Mammary epithelial cell (primary cell): ENCODE measurements at regions of chr2 and their contacts with region 1.

Region 1: DNA sequence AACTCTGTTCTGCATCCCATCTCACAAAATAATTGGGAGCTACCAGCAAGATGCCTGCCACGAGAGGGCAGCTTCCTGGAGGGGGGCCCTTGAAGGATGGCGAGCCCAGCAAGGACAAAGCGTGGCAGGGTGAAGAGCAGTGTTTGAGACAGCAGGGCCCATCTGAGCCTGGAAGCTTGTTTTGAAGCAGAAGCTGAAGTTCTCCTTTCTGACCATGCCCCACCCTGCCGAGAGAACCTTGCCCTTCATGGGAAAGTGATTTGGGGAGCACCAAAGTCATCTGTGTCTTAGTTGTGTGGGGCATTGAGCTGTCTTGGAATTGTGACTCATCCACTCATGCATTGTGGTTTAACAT is 216.3 kb downstream of the BCL11A start:
- DNase-seq: no peak
- H3K4me3 ChIP-seq: no peak overlapping the region
- H3K27ac ChIP-seq: no peak overlapping the region
- H3K4me1 ChIP-seq: peaks cover 10% of the 10 kb centered on the region
- H3K27me3 ChIP-seq: no peaks in the 10 kb centered on the region
- CTCF ChIP-seq: no peak

Region 2: GRCh38 chr2:60247471-60247870 is 89.6 kb before region 1 on chr2:
- CTCF ChIA-PET with region 1: no interaction called
- dilution Hi-C with region 1: no loop called
- in situ Hi-C with region 1: no loop called
- intact Hi-C with region 1: loop called (anchors 5 kb)
- DNase-seq: no peak
- H3K4me3 ChIP-seq: no peak overlapping the region
- H3K27ac ChIP-seq: no peak overlapping the region
- H3K4me1 ChIP-seq: no peaks in the 10 kb centered on the region
- H3K27me3 ChIP-seq: no peaks in the 10 kb centered on the region
- CTCF ChIP-seq: no peak

Region 3: DNA sequence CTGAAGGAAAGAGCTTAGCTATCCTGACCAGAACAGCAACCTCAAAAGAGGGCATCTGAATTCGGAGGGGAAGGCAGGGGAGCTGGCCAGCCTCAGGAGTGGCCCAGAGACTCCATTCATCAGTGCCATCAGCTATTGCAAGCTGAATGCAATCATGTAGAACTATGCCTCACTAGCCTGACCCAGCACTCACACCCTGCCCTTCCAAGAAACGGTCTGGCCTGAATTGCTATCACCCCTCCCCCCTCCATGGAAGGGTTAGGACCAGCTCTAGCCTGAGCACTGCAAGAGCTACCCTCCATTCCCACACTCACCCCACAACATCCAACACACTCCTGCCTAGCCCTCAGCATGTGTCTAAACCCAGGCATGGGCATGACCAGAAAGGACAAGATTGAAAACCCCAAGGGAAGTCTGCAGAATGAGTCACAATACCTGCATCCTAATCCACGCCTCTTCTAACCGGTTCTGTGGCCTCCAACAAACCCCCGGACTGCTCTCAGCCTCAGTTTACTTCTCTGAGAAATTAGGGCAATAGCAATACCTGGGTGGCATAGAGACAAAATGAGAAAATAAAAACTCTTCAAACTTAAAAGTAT is 96.0 kb after region 1 on chr2:
- CTCF ChIA-PET with region 1: no interaction called
- dilution Hi-C with region 1: no loop called
- in situ Hi-C with region 1: no loop called
- intact Hi-C with region 1: no loop called
- DNase-seq: peak; percentile 58
- H3K4me3 ChIP-seq: no peak overlapping the region
- H3K27ac ChIP-seq: no peak overlapping the region
- H3K4me1 ChIP-seq: peaks cover 7% of the 10 kb centered on the region
- H3K27me3 ChIP-seq: no peaks in the 10 kb centered on the region
- CTCF ChIP-seq: no peak

Region 4: DNA sequence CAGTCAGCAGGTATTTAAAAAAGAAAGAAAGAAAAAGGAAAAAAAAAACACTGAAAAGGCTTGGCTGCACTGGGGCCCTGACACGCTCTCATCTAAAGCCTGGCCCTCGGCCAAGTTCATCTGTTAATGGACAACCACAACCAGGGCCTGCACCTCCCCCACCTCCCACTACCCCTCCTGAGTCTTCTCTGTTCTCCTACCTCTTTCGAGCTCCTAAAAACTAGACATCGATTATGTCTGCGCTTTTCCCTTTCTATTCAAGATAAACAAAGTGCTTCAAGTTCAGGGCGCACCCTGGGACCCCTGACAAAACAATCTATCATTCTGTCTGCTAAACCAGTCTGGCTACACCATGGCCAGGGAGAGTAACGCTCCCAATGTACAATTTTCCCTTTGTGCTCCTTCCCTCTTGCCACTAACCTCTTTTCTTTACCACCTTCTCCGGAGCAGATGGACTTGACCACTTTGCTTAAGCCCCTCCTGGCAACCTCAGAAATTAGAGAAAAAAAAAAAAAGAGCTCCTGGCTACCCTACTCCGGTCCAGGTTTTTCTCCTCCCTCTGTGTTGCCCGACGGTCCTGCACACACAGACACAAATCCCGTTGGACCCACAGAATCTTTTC is 193.7 kb after region 1 on chr2:
- CTCF ChIA-PET with region 1: no interaction called
- dilution Hi-C with region 1: no loop called
- in situ Hi-C with region 1: no loop called
- intact Hi-C with region 1: no loop called
- DNase-seq: peak; percentile 43
- H3K4me3 ChIP-seq: peak overlapping the region in 2 of 3 experiments; percentile 4 to 15
- H3K27ac ChIP-seq: no peak overlapping the region
- H3K4me1 ChIP-seq: peaks cover 14% of the 10 kb centered on the region
- H3K27me3 ChIP-seq: no peaks in the 10 kb centered on the region
- CTCF ChIP-seq: no peak